WTC11 (cell line): ENCODE measurements at regions of chr15 and their contacts with region 1.

Region 1: DNA sequence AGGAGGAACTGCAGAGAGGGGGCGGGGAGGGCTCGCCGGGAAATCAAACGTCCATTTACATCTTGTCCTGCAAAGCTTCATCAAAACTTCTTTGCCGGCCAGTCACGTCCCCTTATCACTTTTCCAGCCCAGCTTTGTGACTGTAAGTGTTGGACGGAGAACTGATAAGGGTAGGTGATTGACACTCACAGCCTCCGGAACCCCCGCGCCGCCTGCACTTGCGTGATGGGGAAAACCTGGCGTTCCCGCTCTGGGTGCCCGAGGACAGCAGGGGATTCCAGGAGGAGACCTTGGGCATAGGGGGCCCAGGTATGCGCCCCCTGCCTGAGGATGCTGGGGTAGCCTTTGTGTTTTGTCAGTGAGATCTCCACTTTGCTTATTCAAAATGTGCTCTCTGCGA is 72.8 kb upstream of the ANKRD34C start:
- DNase-seq: peak; percentile 67
- ATAC-seq: peak; percentile 73
- H3K4me3 Mint-ChIP-seq: peak overlapping the region; percentile 59
- H3K27ac Mint-ChIP-seq: no peak overlapping the region
- H3K4me1 Mint-ChIP-seq: peaks cover 37% of the 10 kb centered on the region
- H3K27me3 Mint-ChIP-seq: no peaks in the 10 kb centered on the region
- CTCF ChIP-seq: peak; percentile 64

Region 2: DNA sequence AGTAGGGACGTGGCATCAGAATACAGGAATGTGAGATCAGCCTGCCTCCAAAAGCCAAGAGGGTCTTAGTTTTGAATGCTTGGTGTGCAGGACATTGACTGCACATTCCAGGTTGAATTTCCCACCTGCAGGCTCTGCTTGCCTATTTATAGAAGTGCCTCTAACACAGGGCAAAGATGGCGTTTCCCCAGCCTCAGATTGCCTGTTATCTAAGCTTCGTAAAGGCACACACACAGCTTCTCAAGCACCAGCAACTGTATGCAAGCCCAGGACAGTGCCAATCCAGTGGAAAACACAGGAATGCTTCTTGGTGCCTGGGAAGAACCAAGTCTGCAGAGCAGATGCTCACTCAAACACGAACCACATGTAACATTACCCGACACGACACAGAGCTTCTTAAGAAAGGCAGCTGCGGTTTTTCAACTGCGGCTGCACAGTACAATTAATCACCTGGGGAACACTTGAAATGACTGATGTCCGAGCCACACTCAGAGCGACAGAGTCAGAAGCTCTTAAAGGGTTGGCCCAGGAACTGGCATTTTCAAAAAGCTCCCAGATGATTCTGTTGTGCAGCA is 17.1 kb before region 1 on chr15:
- CTCF ChIA-PET with region 1: interaction called, 74 read pairs
- POLR2A ChIA-PET with region 1: interaction called, 3 read pairs
- DNase-seq: no peak
- ATAC-seq: no peak
- H3K4me3 Mint-ChIP-seq: no peak overlapping the region
- H3K27ac Mint-ChIP-seq: no peak overlapping the region
- H3K4me1 Mint-ChIP-seq: peaks cover 27% of the 10 kb centered on the region
- H3K27me3 Mint-ChIP-seq: peaks cover 7% of the 10 kb centered on the region
- CTCF ChIP-seq: no peak

Region 3: GRCh38 chr15:79593119-79593867 is 383.6 kb after region 1 on chr15:
- CTCF ChIA-PET with region 1: no interaction called
- POLR2A ChIA-PET with region 1: no interaction called
- DNase-seq: peak; percentile 22
- ATAC-seq: peak; percentile 36
- H3K4me3 Mint-ChIP-seq: no peak overlapping the region
- H3K27ac Mint-ChIP-seq: no peak overlapping the region
- H3K4me1 Mint-ChIP-seq: no peaks in the 10 kb centered on the region
- H3K27me3 Mint-ChIP-seq: no peaks in the 10 kb centered on the region; the same call in 1 of the 2 replicates
- CTCF ChIP-seq: no peak